Caco-2 (cell line): ENCODE measurements at regions of chr6 and their contacts with region 1.

Region 1: GRCh38 chr6:25992413-25993037 is 29.9 kb downstream of the TRIM38 start:
- DNase-seq: peak; percentile 91 to 98
- H3K4me3 ChIP-seq: peak overlapping the region; percentile 54
- H3K4me3 Mint-ChIP-seq: peak overlapping the region; percentile 95
- H3K27ac Mint-ChIP-seq: peak overlapping the region; percentile 93
- H3K4me1 ChIP-seq: no peaks in the 10 kb centered on the region; the same call in 1 of the 2 replicates
- H3K4me1 Mint-ChIP-seq: no peaks in the 10 kb centered on the region
- H3K27me3 ChIP-seq: no peaks in the 10 kb centered on the region
- H3K27me3 Mint-ChIP-seq: no peaks in the 10 kb centered on the region
- CTCF ChIP-seq: peak; percentile 86 to 99

Region 2: GRCh38 chr6:25732468-25733198 is 259.9 kb before region 1 on chr6:
- CTCF ChIA-PET with region 1: no interaction called
- POLR2A ChIA-PET with region 1: no interaction called
- intact Hi-C with region 1: no loop called
- DNase-seq: no peak
- H3K4me3 ChIP-seq: no peak overlapping the region
- H3K4me3 Mint-ChIP-seq: no peak overlapping the region
- H3K27ac Mint-ChIP-seq: no peak overlapping the region
- H3K4me1 ChIP-seq: no peaks in the 10 kb centered on the region
- H3K4me1 Mint-ChIP-seq: no peaks in the 10 kb centered on the region
- H3K27me3 ChIP-seq: no peaks in the 10 kb centered on the region
- H3K27me3 Mint-ChIP-seq: peaks cover 3% of the 10 kb centered on the region
- CTCF ChIP-seq: no peak

Region 3: DNA sequence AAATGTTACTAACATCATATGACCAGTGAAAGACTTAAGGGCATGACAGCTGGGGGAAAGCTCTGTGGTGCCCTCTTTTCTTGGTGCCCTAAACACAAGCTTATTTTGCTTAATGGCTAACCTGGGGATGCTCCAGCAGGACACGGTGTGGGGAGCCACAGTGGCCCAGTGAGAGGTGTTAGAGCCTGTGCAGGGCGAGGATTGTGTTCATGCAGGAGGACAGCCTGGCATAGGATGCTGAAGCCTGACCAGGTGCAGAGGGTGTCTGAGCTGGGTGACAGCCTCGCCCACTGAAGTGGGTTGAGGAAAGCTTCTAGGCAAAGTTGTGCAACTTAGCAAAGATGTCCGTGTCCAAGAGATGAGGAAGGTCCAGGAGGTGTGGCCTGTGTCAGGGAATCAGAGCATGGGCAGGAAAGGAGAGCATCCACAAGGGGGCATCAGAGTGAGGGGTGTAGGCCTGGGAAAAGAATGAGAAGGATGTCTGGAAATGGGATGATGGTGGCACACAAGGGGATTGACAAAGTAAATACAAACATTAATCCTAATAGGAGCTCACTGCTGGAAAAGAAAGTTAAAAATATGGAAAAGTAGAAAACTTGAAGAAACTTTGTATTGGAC is 204.1 kb before region 1 on chr6:
- CTCF ChIA-PET with region 1: no interaction called
- POLR2A ChIA-PET with region 1: no interaction called
- intact Hi-C with region 1: loop called (anchors 2 kb)
- DNase-seq: peak; percentile 66 to 77
- H3K4me3 ChIP-seq: no peak overlapping the region
- H3K4me3 Mint-ChIP-seq: no peak overlapping the region
- H3K27ac Mint-ChIP-seq: no peak overlapping the region
- H3K4me1 ChIP-seq: no peaks in the 10 kb centered on the region
- H3K4me1 Mint-ChIP-seq: no peaks in the 10 kb centered on the region
- H3K27me3 ChIP-seq: no peaks in the 10 kb centered on the region
- H3K27me3 Mint-ChIP-seq: peaks cover 3% of the 10 kb centered on the region
- CTCF ChIP-seq: peak; percentile 46 to 73

Region 4: GRCh38 chr6:25889877-25890853 is 102.4 kb before region 1 on chr6:
- CTCF ChIA-PET with region 1: interaction called, 3 read pairs
- POLR2A ChIA-PET with region 1: no interaction called
- intact Hi-C with region 1: loop called (anchors 5 kb)
- DNase-seq: peak; percentile 39 to 67
- H3K4me3 ChIP-seq: no peak overlapping the region
- H3K4me3 Mint-ChIP-seq: no peak overlapping the region
- H3K27ac Mint-ChIP-seq: no peak overlapping the region
- H3K4me1 ChIP-seq: no peaks in the 10 kb centered on the region
- H3K4me1 Mint-ChIP-seq: no peaks in the 10 kb centered on the region
- H3K27me3 ChIP-seq: no peaks in the 10 kb centered on the region
- H3K27me3 Mint-ChIP-seq: no peaks in the 10 kb centered on the region
- CTCF ChIP-seq: peak; percentile 31 to 50

Region 5: DNA sequence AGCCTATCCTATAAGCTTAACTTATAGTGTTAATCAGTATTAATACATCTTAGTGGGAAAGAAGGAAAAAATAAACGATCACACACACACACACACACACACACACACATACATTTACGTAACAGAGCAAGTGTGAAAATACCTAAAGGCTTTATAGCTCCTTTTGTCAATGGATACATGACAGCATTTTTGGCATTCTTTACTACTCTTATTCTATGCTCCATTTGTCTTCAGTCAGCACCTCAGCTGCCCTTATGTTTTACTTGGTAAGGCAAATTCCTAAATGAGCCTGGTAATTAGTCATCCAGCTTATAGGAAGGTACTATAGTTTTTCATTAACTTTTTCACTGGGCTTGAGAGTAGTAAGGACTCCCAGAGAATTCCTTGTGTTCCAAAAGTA is 93.4 kb before region 1 on chr6:
- CTCF ChIA-PET with region 1: interaction called, 10 read pairs
- POLR2A ChIA-PET with region 1: no interaction called
- intact Hi-C with region 1: loop called (anchors 5 kb)
- DNase-seq: peak in 1 of 2 experiments; percentile 18
- H3K4me3 ChIP-seq: no peak overlapping the region
- H3K4me3 Mint-ChIP-seq: peak overlapping the region; percentile 48
- H3K27ac Mint-ChIP-seq: peak overlapping the region; percentile 58
- H3K4me1 ChIP-seq: peaks cover 30% of the 10 kb centered on the region
- H3K4me1 Mint-ChIP-seq: peaks cover 34% of the 10 kb centered on the region
- H3K27me3 ChIP-seq: no peaks in the 10 kb centered on the region
- H3K27me3 Mint-ChIP-seq: no peaks in the 10 kb centered on the region
- CTCF ChIP-seq: no peak

Region 6: DNA sequence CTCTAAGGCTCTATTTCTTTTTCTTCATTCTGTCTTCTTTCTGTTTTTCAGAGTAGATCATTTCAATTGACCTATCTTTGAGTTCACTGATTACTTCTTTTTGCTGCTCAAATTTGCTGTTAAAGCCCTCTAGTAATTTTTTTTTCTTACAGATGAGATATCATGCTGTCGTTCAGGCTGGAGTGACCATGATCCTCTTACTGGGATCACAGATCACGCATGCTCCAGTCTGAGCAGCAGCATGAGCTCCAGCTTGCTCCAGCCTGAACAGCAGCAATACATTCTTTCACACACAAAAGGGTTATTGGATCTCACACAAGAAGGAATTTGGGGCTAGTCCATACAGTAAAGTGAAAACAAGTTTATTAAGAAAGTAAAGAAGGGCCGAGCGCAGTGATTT is 42.2 kb before region 1 on chr6:
- CTCF ChIA-PET with region 1: interaction called, 3 read pairs
- POLR2A ChIA-PET with region 1: no interaction called
- intact Hi-C with region 1: loop called (anchors 2 kb)
- DNase-seq: no peak
- H3K4me3 ChIP-seq: no peak overlapping the region
- H3K4me3 Mint-ChIP-seq: no peak overlapping the region
- H3K27ac Mint-ChIP-seq: no peak overlapping the region
- H3K4me1 ChIP-seq: peaks cover 13% of the 10 kb centered on the region
- H3K4me1 Mint-ChIP-seq: peaks cover 6% of the 10 kb centered on the region
- H3K27me3 ChIP-seq: no peaks in the 10 kb centered on the region
- H3K27me3 Mint-ChIP-seq: no peaks in the 10 kb centered on the region
- CTCF ChIP-seq: no peak

Region 7: DNA sequence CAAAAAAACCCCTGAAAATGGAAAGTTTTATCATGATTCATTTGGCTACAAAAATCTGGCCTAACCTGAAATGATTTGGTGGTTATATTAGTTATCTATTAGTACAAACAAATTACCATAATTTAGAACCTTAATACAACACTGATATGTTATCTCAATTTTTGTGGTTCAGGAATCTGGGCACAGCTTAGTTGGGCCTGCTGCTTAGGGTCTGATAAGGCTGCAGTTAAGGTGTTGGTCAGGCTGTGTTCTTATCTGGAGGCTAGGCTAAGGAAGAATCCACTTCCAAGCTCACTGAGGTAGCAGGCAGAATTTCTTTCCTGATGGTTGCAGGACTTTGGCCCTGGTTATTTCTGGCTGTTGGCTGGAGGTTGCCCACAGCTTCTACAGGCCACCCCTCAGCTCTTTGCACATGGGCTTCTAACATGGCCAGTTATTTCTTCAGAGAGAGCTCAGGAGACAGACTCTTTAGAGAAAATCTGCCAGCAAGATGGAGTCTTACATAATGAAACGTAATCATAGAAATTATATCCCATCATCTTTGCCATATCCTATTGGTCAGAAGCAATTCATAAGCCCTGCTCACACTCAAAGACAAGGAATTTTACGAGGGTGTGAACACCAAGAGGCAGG is 18.5 kb before region 1 on chr6:
- CTCF ChIA-PET with region 1: interaction called, 18 read pairs
- POLR2A ChIA-PET with region 1: no interaction called
- intact Hi-C with region 1: loop called (anchors 2 kb)
- DNase-seq: peak; percentile 9 to 66
- H3K4me3 ChIP-seq: no peak overlapping the region
- H3K4me3 Mint-ChIP-seq: no peak overlapping the region
- H3K27ac Mint-ChIP-seq: peak overlapping the region; percentile 50
- H3K4me1 ChIP-seq: peaks cover 42% of the 10 kb centered on the region
- H3K4me1 Mint-ChIP-seq: peaks cover 26% of the 10 kb centered on the region
- H3K27me3 ChIP-seq: no peaks in the 10 kb centered on the region
- H3K27me3 Mint-ChIP-seq: no peaks in the 10 kb centered on the region
- CTCF ChIP-seq: no peak

Region 8: DNA sequence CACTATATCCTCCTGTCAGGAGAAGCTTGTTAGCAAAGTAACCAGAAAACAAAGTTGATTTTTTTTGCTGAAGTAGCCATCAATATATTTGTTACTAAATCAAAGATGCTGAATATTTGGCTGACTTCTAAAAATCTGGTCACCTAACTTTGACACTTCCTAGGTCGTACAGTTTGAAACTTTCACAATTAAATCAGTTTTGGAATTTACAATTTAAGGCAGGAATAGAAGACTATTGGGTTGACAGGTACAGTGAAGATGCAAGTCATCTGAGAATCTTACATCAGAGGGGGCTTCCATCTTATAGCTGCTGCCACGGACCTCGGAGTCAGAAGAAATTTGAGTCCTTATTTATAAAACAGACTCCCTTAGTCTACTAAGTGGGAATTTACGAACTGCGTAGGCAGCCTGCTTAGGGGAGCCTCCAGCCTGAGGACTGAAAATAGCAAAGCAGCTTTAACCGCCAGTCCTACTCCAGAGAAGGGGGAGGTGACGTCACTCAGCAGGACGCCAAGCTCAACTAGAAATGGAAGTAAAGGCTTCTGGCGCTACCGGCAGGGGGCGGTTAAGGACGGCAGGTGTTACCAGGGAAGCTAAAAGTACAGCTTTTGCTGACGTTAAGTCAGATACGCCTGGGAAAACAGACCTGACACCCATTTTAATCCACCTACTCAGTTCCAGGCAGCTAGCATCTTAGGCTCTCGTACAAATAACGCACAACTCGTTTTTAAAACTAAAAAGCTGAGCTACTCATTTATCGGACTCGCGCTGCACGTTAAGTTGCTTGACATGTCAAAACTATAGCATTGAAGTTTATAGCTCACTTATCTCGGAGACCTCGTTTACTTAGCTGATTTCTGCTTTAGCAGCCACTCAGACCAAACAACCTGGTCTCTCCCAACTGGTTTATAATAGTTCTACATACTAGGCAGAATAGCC is 33.6 kb after region 1 on chr6:
- CTCF ChIA-PET with region 1: interaction called, 20 read pairs
- POLR2A ChIA-PET with region 1: interaction called, 22 read pairs
- intact Hi-C with region 1: no loop called
- DNase-seq: peak; percentile 94 to 95
- H3K4me3 ChIP-seq: peak overlapping the region; percentile 74
- H3K4me3 Mint-ChIP-seq: peak overlapping the region; percentile 85
- H3K27ac Mint-ChIP-seq: peak overlapping the region; percentile 100
- H3K4me1 ChIP-seq: peaks cover 18% of the 10 kb centered on the region; the same call in 1 of the 2 replicates
- H3K4me1 Mint-ChIP-seq: peaks cover 35% of the 10 kb centered on the region
- H3K27me3 ChIP-seq: no peaks in the 10 kb centered on the region
- H3K27me3 Mint-ChIP-seq: peaks cover 4% of the 10 kb centered on the region
- CTCF ChIP-seq: peak; percentile 81 to 87